Posterior vena cava (tissue), 2 donors: ENCODE measurements at regions of chr19 and their contacts with region 1.

Region 1: GRCh38 chr19:10000171-10000826 is 10.0 kb downstream of the COL5A3 start:
- DNase-seq: peak; percentile 89

Region 2: GRCh38 chr19:9914315-9915207 is 85.7 kb before region 1 on chr19:
- intact Hi-C with region 1: no loop called
- DNase-seq: peak; percentile 90

Region 3: DNA sequence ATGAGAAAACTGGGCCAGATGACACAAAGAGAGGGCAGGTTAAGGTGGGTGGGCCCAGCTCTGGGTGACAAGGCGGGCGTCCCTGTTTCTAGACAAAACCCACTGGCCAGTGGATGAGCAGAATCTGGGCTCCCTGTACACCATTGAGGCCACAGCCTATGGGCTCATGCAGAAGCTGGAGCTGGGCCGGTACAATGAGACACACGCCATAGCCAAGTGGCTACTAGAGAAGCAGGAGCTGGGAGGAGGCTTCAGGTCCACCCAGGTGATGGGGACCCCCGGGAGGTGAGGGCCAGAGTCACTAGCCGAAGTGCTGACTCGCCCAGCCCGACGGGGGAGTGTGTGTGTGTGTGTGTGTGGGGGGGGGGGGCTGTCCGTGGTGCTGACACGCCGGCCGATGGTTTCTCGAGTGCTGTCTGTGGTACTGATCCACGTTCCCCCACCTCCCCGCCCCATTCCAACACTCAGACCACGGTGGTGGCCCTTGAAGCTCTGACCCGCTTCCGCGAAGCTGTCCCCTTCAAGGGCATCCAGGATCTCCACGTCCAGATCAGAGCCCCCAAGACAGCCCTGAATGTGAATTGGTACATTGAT is 61.5 kb after region 1 on chr19:
- intact Hi-C with region 1: loop called in 1 of 2 experiments (anchors 2 kb)
- DNase-seq: no peak